HEK293T (cell line): ENCODE measurements at regions of chr22 and their contacts with region 1.

Region 1: GRCh38 chr22:43014869-43015676 is at the start of gene PACSIN2:
- DNase-seq: peak; percentile 99

Region 2: GRCh38 chr22:42959576-42960509 is 55.2 kb before region 1 on chr22:
- CTCF ChIA-PET with region 1: no interaction called
- POLR2A ChIA-PET with region 1: interaction called, 21 read pairs
- DNase-seq: peak; percentile 63

Region 3: GRCh38 chr22:42964994-42965699 is 49.9 kb before region 1 on chr22:
- CTCF ChIA-PET with region 1: no interaction called
- POLR2A ChIA-PET with region 1: interaction called, 21 read pairs
- DNase-seq: no peak

Region 4: GRCh38 chr22:43001271-43002201 is 13.5 kb before region 1 on chr22:
- CTCF ChIA-PET with region 1: no interaction called
- POLR2A ChIA-PET with region 1: interaction called, 30 read pairs
- DNase-seq: no peak